ENCODE measurements at regions of chr1 and their contacts with region 1.

Region 1: DNA sequence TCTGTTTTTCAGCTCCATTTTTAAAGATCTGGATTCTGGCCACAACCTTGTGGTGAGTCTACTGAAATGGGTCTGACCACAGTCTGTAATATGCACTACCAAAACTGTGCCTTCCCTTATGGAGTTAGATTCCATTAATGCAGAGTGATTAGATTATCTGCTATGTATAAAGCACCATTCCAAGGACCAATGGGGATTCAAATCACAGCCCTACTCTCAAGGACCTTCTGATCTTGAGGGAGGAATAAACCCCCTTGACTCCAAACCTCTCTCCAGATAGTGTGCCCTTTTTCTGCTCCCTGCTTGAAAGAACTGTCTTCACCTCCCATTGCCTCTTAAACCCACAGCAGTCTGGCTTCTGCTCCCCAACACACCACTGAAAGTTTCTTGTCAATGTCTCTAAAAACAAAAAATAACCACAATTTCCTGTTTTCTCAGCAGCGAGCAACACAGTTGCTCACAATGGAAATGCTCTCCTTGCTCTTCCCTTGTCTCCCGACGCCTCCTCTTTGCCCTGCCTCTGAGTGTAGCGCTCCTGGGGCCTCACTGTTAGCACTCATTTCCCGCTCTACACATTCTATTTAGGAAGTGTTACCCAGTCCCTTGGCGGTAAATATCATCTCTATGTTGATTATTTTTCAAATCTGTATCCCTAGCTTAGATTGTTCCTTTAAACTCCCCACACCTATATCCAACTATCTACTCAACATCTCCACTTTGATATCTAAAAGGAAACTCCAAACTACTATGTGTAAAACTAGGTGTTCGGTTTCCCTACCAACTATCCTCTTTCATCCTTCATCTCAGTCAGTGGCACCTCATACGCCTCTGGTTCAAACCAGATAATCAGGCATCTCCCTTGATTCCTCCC is 13.6 kb downstream of the PCNX2 start:
- DNase-seq: peak; percentile 38
- H3K4me3 Mint-ChIP-seq: peak overlapping the region; percentile 32
- H3K27ac Mint-ChIP-seq: peak overlapping the region; percentile 66
- H3K4me1 Mint-ChIP-seq: peaks cover 35% of the 10 kb centered on the region
- H3K27me3 Mint-ChIP-seq: no peaks in the 10 kb centered on the region

Region 2: DNA sequence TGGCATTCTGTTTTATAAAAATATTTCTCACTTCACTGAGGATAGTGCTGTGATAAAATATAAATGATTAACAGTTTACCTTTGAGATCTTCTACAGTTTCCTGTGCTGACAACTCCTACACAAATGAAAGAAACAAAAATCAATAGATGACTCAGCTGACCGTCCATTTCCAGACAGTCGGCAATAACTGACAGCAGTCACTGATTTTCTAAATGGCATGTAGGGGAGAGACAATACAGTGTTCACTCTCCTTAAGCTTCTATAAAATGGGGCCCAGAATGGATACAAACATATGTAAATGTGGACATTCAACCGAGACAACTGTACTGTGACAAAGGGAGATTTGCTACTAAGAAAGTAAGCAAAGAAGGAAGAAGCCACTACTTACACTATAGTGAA is 20.7 kb before region 1 on chr1:
- CTCF ChIA-PET with region 1: no interaction called
- intact Hi-C with region 1: no loop called
- DNase-seq: no peak
- H3K4me3 Mint-ChIP-seq: no peak overlapping the region
- H3K27ac Mint-ChIP-seq: no peak overlapping the region
- H3K4me1 Mint-ChIP-seq: peaks cover 4% of the 10 kb centered on the region
- H3K27me3 Mint-ChIP-seq: no peaks in the 10 kb centered on the region

Region 3: GRCh38 chr1:233295237-233295974 is 13.5 kb after region 1 on chr1 and contains the start of gene PCNX2:
- CTCF ChIA-PET with region 1: interaction called, 3 read pairs
- intact Hi-C with region 1: loop called (anchors 1 kb)
- DNase-seq: peak; percentile 77
- H3K4me3 Mint-ChIP-seq: peak within 1 kb of the TSS; percentile 91
- H3K27ac Mint-ChIP-seq: peak within 1 kb of the TSS; percentile 90
- H3K4me1 Mint-ChIP-seq: peaks cover 25% of the 10 kb centered on the region
- H3K27me3 Mint-ChIP-seq: no peaks in the 10 kb centered on the region
- total RNA-seq, gene PCNX2: 11.5 to 12.2 TPM

Region 4: DNA sequence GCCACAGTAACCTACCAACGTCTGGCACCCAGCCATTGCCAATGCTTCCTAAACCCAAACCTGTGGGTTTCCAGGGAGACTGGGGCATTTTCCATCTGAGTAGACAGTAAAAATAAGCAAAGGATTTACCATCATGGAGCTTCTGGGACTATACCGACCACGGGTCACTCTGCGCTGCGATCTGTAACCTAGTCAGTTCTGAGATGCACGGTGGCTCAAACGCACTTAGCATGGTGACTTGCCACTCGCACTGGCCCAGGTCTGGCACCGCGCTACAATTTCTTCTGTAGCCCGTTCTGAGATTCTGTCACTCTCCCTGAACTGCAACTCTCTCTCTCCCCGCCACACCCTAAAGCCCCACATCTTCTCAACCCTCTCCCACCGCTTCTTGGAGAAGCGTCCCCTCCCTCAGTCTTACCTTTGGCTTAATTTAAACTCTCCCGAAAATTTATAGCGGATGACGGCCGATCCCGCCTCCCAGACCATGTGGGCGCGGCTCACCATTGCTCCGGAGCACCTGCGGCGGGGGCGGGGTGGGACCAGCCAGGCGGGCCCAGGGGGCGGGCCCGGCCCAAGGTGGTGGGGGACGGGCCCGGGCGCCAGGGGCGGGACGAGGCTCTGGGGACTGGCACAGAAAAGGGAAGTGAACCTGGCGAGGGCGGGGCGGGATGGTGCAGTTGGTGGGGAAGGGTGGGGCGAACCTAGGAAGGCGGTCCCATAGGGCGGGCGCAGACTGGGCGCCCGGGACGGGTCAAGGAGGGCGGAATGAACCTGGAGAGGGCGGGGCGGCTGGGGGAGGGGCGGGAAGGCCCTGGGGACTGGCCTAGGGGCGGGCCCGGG is 45.1 kb after region 1 on chr1:
- CTCF ChIA-PET with region 1: no interaction called
- intact Hi-C with region 1: loop called (anchors 5 kb)
- DNase-seq: peak; percentile 93
- H3K4me3 Mint-ChIP-seq: peak overlapping the region; percentile 67
- H3K27ac Mint-ChIP-seq: no peak overlapping the region
- H3K4me1 Mint-ChIP-seq: peaks cover 10% of the 10 kb centered on the region
- H3K27me3 Mint-ChIP-seq: peaks cover 20% of the 10 kb centered on the region

Region 5: DNA sequence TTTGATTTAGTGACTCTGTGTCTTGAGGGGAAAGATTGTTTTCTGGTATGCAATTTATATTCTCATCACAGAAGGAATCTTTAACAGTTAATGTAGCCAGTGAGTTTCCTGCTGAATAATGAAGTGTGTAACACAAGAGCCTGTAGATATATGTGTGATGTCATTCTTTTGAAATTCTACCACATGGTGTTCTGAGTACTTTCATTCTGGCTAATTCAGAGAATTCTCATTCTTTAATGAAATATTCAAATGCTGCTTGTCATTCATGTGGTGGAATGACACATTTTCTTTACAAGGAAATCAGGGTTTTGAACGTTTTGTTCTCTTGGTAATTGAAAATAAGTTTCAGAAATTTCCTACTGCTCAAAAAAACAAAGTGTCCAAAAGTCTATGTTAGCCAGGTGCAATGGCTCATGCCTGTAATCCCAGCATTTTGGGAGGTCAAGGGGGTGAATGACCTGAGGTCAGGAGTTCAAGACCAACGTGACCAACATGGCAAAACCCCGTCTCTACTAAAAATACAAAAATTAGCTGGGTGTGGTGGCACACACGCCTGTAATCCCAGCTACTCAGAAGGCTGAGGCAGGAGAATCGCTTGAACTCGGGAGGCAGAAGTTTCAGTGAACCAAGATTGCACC is 125.2 kb after region 1 on chr1:
- CTCF ChIA-PET with region 1: no interaction called
- intact Hi-C with region 1: loop called (anchors 1 kb)
- DNase-seq: no peak
- H3K4me3 Mint-ChIP-seq: no peak overlapping the region
- H3K27ac Mint-ChIP-seq: no peak overlapping the region
- H3K4me1 Mint-ChIP-seq: peaks cover 14% of the 10 kb centered on the region
- H3K27me3 Mint-ChIP-seq: peaks cover 31% of the 10 kb centered on the region

Measured in activated naive CD4-positive, alpha-beta T cell treated with anti-CD3 and anti-CD28 coated beads for 36 hours (primary cell).